ENCODE measurements at regions of chr14 and their contacts with region 1.

Region 1: GRCh38 chr14:50860478-50861086 is 11.3 kb upstream of the ABHD12B start:
- DNase-seq: peak; percentile 87
- H3K4me3 ChIP-seq: peak overlapping the region; percentile 68
- H3K27ac ChIP-seq: peak overlapping the region; percentile 62
- H3K4me1 ChIP-seq: peaks cover 39% of the 10 kb centered on the region
- CTCF ChIP-seq: peak; percentile 82

Region 2: GRCh38 chr14:50599700-50600444 is 260.7 kb before region 1 on chr14:
- CTCF ChIA-PET with region 1: no interaction called
- POLR2A ChIA-PET with region 1: interaction called, 5 read pairs
- intact Hi-C with region 1: loop called (anchors 2 kb)
- DNase-seq: peak; percentile 45
- H3K4me3 ChIP-seq: no peak overlapping the region
- H3K27ac ChIP-seq: no peak overlapping the region
- H3K4me1 ChIP-seq: no peaks in the 10 kb centered on the region
- CTCF ChIP-seq: peak; percentile 87

Region 3: GRCh38 chr14:50714450-50715073 is 146.0 kb before region 1 on chr14:
- CTCF ChIA-PET with region 1: no interaction called
- POLR2A ChIA-PET with region 1: interaction called, 8 read pairs
- intact Hi-C with region 1: loop called (anchors 5 kb)
- DNase-seq: peak; percentile 52
- H3K4me3 ChIP-seq: no peak overlapping the region
- H3K27ac ChIP-seq: no peak overlapping the region
- H3K4me1 ChIP-seq: no peaks in the 10 kb centered on the region
- CTCF ChIP-seq: peak; percentile 84

Region 4: GRCh38 chr14:50785457-50786063 is 75.0 kb before region 1 on chr14:
- CTCF ChIA-PET with region 1: interaction called, 32 read pairs
- POLR2A ChIA-PET with region 1: interaction called, 40 read pairs
- intact Hi-C with region 1: loop called (anchors 1 kb)
- DNase-seq: peak; percentile 35
- H3K4me3 ChIP-seq: no peak overlapping the region
- H3K27ac ChIP-seq: peak overlapping the region; percentile 97
- H3K4me1 ChIP-seq: peaks cover 59% of the 10 kb centered on the region
- CTCF ChIP-seq: no peak

Region 5: DNA sequence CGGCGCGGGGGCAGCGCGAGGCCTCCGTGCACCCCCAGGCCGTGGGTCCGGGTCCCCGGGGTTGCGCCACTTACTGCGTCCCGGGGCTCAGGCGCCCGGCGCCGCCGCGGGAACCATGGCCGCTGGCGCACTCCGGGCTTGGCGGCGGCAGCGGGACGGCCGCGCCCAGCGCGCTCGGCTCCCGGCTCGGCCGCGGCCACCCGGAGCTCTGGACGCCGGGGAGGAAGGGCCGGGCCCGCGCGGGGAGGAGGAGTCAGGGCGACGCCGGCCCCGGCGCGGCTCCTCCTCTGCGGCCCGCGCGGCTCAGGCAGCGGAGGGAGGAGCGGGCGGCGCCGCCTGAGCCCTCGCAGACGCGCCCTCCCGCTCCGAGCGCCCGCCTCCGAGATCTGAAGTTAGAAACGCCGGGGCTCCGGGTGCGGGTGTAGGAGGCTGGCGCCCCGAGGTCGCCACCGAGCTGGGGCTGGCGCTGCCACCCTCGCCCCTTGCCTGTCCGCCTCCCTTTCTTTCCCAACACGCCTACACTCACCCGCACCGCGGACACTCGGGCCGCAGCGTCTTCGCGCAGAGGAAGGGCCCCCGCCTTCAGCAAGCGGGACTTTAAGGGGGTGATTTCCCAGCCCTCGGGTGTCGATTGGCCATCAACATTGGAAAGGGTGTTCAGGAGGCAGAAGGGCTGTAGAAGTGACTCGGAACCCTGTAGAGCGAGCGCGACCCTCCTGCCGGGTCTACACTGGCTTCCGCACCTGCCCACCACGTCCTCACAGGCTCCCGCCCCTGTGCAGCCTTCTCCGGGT is 29.5 kb before region 1 on chr14 and contains the start of gene NIN:
- CTCF ChIA-PET with region 1: interaction called, 11 read pairs
- POLR2A ChIA-PET with region 1: interaction called, 36 read pairs
- intact Hi-C with region 1: loop called (anchors 1 kb)
- DNase-seq: peak; percentile 87
- H3K4me3 ChIP-seq: peak within 1 kb of the TSS; percentile 71
- H3K27ac ChIP-seq: peak within 1 kb of the TSS; percentile 74
- H3K4me1 ChIP-seq: peaks cover 66% of the 10 kb centered on the region
- CTCF ChIP-seq: no peak
- total RNA-seq, gene NIN: 79.5 and 95.3 TPM in 2 replicates

Region 6: DNA sequence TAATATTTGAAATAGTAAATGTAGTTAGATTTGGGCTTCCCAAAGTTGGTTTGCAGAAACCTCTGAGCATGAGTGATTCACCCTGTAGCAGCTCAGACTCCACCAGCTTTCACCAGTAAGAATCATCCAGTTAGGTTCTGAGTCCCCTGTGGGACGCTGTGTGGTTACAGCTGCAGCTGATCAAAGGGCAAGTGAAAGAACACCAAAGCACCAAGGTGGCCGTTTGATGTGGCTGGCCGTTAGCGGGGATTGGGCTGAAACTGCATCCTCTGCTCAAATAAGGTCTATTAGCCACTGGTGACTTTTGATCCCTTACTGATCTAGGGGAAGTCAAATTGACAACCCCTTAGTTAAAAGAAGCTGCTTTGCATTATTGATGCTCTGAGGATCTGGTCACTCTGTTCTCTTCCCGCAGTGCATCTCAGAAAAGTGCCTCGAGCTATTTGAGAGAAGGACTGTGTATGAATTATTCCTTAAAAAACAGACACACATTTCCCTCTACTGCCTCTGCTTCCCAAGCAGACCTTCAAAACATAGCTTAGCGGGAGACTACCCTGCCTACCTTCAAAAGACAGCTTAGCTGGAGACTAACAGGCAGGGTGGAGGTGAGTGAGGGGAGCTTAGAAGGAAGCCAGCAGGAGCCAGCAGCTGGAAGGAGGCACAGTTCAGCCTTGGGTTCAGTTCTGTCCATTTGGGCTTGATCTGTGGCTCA is 14.9 kb after region 1 on chr14:
- CTCF ChIA-PET with region 1: interaction called, 11 read pairs
- POLR2A ChIA-PET with region 1: interaction called, 20 read pairs
- intact Hi-C with region 1: no loop called
- DNase-seq: peak; percentile 96
- H3K4me3 ChIP-seq: peak overlapping the region; percentile 63
- H3K27ac ChIP-seq: peak overlapping the region; percentile 95
- H3K4me1 ChIP-seq: peaks cover 66% of the 10 kb centered on the region
- CTCF ChIP-seq: no peak